Lower leg skin (tissue), 4 donors: ENCODE measurements at regions of chr4 and their contacts with region 1.

Region 1: DNA sequence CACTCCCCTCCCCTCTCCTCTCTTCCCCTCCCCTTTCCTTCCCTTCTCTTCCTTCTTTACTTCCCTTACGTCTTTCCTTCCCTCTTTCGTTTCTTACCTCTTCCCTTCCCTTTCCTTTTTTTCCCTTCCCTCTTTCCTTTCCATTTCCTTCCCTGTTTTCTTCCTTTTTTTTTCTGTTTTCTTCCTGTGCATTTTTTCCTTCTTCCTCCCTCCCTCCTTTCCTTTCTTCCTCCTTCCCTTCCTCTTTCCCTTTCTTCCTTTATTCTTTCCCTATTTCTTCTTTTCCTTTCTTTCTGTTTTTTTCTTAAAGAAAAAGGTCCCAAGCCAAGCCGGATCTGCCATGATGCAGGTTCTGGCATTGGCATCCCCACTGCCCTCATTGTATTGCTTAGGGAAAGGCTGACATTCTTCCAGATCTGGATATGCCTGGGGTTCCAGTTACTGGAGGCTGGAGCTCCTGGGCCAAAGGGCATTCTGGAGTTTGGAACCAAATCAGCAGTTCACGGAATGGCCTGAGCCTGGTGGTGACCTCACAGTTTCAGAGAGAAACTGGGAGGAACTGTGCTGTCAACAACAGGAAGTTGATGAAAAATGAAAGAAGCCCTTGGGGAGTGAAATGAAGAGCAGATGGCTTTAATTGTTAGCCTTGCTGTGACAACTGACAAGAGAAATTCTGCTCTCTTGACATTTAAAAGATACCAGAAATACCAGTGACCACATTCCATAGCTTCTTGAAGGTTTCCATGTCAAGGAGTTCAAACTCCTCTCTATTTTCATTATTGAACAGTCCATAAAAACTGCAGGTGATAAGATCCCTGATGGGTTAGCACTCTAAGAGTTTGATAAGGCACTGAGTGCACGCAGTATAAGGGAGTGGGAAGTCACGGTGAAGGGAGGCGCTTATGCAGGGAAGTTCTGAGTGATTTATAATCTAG is 622.1 kb downstream of the SPRY1 start:
- DNase-seq: peak; percentile 66 to 85
- H3K4me3 ChIP-seq: no peak overlapping the region
- CTCF ChIP-seq: no peak
- POLR2A ChIP-seq: no peak

Region 2: DNA sequence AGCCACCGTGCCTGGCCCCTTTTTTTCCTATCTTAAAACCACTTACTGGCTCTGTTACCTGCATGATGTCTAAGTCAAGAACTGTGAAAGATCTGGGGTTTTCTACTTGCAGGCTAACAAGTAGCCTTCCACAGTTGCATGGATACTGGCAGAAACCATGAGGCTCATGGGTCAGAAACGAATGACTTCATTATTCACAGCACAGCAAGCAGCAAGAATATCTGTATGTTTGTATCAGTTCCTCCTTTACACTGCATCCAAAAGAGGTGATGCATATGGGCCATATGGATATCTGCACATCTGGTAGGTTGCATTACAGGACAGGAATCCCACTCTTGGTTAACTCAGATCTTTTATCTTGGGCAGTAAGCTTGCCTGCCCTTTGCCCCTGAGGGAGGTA is 941.3 kb before region 1 on chr4:
- intact Hi-C with region 1: loop called (anchors 5 kb)
- DNase-seq: no peak
- H3K4me3 ChIP-seq: no peak overlapping the region
- CTCF ChIP-seq: no peak
- POLR2A ChIP-seq: no peak

Region 3: GRCh38 chr4:124304941-124305340 is 286.3 kb after region 1 on chr4:
- intact Hi-C with region 1: no loop called
- DNase-seq: no peak
- H3K4me3 ChIP-seq: no peak overlapping the region
- CTCF ChIP-seq: no peak
- POLR2A ChIP-seq: no peak